ENCODE measurements at regions of chr1 and their contacts with region 1.

Region 1: GRCh38 chr1:25503551-25504426 is 39.6 kb upstream of the LDLRAP1 start:
- DNase-seq: peak; percentile 39
- ATAC-seq: peak; percentile 98
- H3K4me3 ChIP-seq: no peak overlapping the region
- H3K27ac ChIP-seq: no peak overlapping the region
- H3K4me1 ChIP-seq: peaks cover 10 to 18% of the 10 kb centered on the region in 2 experiments
- H3K27me3 ChIP-seq: no peaks in the 10 kb centered on the region
- CTCF ChIP-seq: peak; percentile 77 to 89 (median 87)
- POLR2A ChIP-seq: no peak
- RAD21 ChIP-seq: peak; percentile 93

Region 2: DNA sequence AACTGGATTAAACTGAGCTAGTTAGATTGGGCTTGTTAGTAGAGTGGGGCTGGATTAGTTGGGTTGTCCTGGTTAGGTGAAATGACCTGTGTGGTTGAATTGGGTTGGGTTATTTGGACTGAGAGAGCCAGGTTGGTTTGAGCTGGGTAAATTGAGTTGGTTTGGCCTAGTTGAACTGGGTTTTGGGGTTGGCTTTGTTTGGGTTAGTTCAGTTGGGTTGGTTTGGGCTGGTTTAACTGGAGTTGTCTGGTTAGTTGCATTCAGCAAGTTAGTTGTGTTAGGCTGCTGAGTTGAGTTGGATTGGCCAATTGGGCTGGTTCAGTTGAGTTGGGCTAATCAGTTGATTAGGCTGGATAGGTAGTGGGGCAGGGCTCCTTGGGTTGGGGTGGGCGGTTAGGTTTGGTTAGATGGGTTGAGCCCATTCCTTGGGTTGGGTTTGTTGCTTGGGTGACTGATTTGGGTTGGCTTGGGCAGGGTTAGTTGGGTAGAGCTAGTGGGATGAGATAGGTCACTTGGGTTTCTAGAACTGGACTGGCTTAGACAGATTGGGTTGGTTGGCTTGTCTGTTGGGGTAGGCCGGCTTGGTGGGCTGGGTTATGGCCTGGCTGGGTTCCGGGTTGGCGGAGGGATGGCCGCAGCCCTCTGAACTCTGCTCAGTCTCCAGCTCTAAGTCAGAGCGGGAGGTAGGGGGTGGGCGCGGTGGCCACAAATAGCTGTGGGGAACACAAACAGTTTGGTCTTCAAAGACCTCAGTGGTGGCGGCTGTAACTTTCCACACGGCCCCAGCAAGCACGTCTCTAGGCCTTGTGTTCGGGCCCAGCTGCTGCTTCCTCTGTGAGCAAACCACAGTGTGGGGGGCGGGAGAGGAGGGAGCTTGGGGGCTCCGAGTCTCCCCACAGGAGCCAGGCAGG is 506.6 kb before region 1 on chr1:
- CTCF ChIA-PET with region 1: no interaction called
- POLR2A ChIA-PET with region 1: no interaction called
- RAD21 ChIA-PET with region 1: no interaction called
- intact Hi-C with region 1: no loop called
- DNase-seq: no peak
- ATAC-seq: no peak
- H3K4me3 ChIP-seq: no peak overlapping the region
- H3K27ac ChIP-seq: no peak overlapping the region
- H3K4me1 ChIP-seq: no peaks in the 10 kb centered on the region
- H3K27me3 ChIP-seq: no peaks in the 10 kb centered on the region
- CTCF ChIP-seq: no peak
- POLR2A ChIP-seq: no peak
- RAD21 ChIP-seq: no peak

Region 3: DNA sequence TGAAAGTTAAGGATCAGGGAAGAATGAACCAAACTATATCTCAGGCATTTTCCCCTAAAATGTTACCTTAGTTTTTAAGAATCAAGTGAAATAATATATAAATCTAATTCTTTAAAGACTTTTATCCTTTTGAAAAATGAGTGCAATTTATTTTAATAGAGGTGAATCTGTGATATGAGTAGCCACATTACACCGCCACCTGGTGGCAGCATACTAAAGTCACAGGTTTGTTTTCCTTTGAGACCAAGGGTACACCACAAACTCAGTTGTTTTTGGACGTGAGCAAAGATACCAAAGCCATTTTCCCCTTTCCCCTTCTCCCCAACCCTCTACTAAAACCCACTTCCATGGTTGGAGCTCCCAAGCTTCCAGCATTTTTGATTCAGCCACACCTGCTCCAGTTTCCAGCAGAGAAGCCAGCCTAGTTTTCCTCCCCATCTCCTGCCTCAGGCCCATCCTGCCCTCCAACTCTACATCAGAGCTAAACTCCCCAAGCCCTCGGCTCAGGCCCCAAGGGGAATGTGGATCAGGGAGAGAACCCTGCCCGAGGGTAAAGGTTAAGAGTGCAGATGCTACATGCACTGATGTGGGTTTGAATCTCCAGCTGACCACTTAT is 16.8 kb after region 1 on chr1:
- CTCF ChIA-PET with region 1: interaction called, 9 read pairs
- POLR2A ChIA-PET with region 1: interaction called, 3 read pairs
- RAD21 ChIA-PET with region 1: no interaction called
- intact Hi-C with region 1: loop called (anchors 1 kb)
- DNase-seq: peak; percentile 48
- ATAC-seq: peak; percentile 61
- H3K4me3 ChIP-seq: no peak overlapping the region
- H3K27ac ChIP-seq: no peak overlapping the region
- H3K4me1 ChIP-seq: no peaks in the 10 kb centered on the region
- H3K27me3 ChIP-seq: no peaks in the 10 kb centered on the region
- CTCF ChIP-seq: peak; percentile 75 to 89 (median 77)
- POLR2A ChIP-seq: no peak
- RAD21 ChIP-seq: peak; percentile 80

Region 4: GRCh38 chr1:25531082-25531461 is 27.3 kb after region 1 on chr1:
- CTCF ChIA-PET with region 1: no interaction called
- POLR2A ChIA-PET with region 1: no interaction called
- RAD21 ChIA-PET with region 1: no interaction called
- intact Hi-C with region 1: no loop called
- DNase-seq: no peak
- ATAC-seq: no peak
- H3K4me3 ChIP-seq: no peak overlapping the region
- H3K27ac ChIP-seq: no peak overlapping the region
- H3K4me1 ChIP-seq: no peaks in the 10 kb centered on the region
- H3K27me3 ChIP-seq: no peaks in the 10 kb centered on the region
- CTCF ChIP-seq: no peak
- POLR2A ChIP-seq: no peak
- RAD21 ChIP-seq: no peak

Region 5: DNA sequence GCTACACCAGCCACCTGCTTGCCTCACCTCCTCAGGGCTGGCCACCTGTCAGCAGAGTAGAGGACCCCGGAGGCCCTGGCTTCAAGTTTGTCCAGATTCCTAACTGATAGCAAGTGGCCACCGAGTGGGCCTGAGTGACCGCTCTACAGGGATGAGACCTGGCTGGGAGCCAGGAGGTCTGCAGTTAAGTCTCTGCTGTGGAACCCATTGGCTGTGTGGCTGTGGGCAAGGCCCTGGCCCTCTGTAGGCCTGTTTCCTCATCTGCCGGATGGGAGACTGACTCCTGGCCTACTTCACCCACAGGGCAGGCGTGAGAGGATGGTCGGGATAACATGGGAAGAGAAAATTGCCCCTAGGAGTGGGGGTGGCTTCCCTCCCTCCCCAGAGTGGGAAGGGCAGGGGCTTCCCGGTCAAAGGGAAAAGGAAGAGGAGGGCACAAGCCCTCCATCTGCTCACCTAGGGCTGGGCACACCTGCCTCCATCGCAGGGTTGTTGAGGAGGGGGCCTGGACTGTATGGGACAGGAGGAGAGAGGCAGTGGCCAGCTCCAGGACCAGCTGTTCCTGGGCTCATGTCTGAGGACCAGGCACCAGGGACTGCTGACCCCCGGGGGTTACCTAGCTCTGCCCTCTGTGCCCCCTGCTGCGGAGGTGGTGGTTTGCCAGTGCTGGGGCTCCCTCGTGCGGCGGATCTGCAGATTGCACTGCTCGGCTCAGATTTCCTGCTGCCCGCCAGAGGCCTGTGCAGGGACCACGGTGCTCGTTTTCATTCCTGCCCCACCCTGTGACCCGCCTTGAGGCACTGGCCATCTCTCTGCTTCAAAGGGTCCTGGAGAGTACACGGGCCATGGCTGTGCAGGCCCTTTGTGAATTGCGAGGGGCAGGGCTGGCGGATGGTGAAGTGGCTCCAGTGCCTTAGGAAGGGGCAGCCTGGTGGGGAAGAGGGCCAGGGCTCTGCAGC is 306.8 kb after region 1 on chr1:
- CTCF ChIA-PET with region 1: interaction called, 11 read pairs
- POLR2A ChIA-PET with region 1: no interaction called
- RAD21 ChIA-PET with region 1: interaction called in 1 of 2 experiments, 3 read pairs
- intact Hi-C with region 1: loop called (anchors 1 kb)
- DNase-seq: no peak
- ATAC-seq: peak; percentile 81
- H3K4me3 ChIP-seq: no peak overlapping the region
- H3K27ac ChIP-seq: no peak overlapping the region; the same call in 1 of the 2 replicates
- H3K4me1 ChIP-seq: peaks cover 0 to 4% of the 10 kb centered on the region in 2 experiments; a peak in 1 of 4 replicates
- H3K27me3 ChIP-seq: no peaks in the 10 kb centered on the region
- CTCF ChIP-seq: peak; percentile 77 to 93 (median 91)
- POLR2A ChIP-seq: no peak
- RAD21 ChIP-seq: peak; percentile 95